ENCODE measurements at regions of chr1 and their contacts with region 1.

Region 1: DNA sequence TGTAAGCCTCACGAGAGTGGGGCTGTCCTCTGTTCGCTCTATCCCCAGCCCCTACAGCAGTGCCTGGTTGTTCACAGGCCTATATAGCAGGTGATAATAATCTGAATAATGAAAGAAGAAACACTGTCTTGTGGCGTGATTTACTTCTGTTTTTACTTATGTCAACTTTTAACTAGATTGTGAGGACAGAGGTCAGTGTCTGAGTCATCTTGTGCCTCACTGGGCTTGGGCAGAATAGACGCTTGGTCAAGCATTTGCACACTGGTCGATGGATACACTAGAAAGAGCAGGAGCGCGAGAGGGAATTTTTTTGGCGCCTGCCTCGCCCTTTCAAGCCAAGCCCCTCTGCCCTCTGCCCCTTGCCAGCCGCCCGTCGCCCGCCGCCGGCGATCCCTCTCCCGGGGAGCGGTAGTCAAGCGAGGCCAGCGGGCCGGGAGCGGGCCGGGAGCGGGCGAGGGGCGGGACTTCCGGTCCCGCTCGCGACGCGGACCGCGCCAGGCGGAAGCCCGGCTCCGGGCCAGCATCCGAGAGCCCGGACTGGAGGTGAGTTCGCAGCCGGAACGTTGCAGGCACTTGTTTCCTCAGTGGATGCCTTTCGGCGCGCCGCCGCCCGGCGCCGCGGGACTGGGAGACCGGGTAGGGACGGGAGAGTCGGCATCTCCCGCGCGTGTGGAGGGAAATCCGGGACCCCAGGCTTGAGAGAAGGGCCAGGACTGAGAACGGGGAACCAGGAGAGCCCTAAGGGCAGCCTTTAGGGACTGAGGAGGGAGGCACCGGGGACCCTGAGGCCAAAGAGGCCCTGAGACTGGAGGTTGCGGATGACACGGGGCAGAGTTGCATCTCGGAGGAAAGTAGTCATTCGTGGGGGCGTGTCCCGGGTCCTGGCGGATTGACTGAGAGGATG is at the start of gene DISP1:
- DNase-seq: peak; percentile 87
- H3K4me3 Mint-ChIP-seq: peak within 1 kb of the TSS; percentile 96
- H3K27ac Mint-ChIP-seq: peak within 1 kb of the TSS; percentile 96
- H3K4me1 Mint-ChIP-seq: peaks cover 28% of the 10 kb centered on the region
- H3K27me3 Mint-ChIP-seq: no peaks in the 10 kb centered on the region
- CTCF ChIP-seq: no peak
- total RNA-seq, gene DISP1: 6.7 and 7.6 TPM in 2 replicates

Region 2: GRCh38 chr1:222301652-222302051 is 513.1 kb before region 1 on chr1:
- CTCF ChIA-PET with region 1: no interaction called
- POLR2A ChIA-PET with region 1: no interaction called
- intact Hi-C with region 1: no loop called
- DNase-seq: no peak
- H3K4me3 Mint-ChIP-seq: no peak overlapping the region
- H3K27ac Mint-ChIP-seq: no peak overlapping the region
- H3K4me1 Mint-ChIP-seq: peaks cover 4% of the 10 kb centered on the region
- H3K27me3 Mint-ChIP-seq: no peaks in the 10 kb centered on the region
- CTCF ChIP-seq: no peak

Region 3: DNA sequence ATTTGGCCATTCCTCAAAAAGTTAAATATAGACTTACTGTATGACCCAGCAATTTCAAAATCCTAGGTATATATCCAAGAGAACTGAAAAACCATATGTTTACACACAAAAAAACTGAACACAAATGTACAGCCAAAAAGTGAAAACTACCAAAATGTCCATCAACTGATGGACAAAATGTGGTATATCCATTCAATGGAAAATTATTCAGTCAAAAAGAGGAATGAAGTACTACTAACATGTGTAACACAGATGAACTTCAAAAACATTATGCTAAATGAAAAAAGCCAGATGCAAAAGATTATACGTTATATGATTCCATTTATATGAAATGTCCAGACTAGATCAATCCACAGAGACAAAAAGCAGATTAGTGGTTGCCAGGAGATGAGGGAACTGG is 110.5 kb before region 1 on chr1:
- CTCF ChIA-PET with region 1: no interaction called
- POLR2A ChIA-PET with region 1: no interaction called
- intact Hi-C with region 1: no loop called
- DNase-seq: no peak
- H3K4me3 Mint-ChIP-seq: no peak overlapping the region
- H3K27ac Mint-ChIP-seq: no peak overlapping the region
- H3K4me1 Mint-ChIP-seq: peaks cover 7% of the 10 kb centered on the region
- H3K27me3 Mint-ChIP-seq: no peaks in the 10 kb centered on the region
- CTCF ChIP-seq: no peak

Region 4: DNA sequence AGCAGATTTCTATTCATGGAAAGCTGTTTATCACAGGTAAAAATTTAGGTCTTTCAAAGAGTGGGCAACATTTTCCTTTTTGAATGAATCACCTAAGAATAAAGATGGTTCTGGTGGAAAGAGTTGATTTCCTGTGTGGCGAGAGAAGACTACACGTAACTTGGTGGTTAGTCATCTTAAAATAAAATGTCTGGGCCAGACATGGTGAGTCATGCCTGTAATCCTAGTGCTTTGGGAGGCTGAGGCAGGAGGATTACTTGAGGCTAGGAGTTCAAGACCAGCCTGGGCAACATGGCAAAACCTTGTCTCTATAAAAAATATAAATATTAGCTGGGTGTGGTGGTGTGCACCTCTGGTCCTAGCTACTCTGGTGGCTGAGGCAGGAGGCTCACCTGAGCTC is 65.8 kb after region 1 on chr1:
- CTCF ChIA-PET with region 1: no interaction called
- POLR2A ChIA-PET with region 1: no interaction called
- intact Hi-C with region 1: no loop called
- DNase-seq: peak; percentile 71
- H3K4me3 Mint-ChIP-seq: no peak overlapping the region
- H3K27ac Mint-ChIP-seq: no peak overlapping the region
- H3K4me1 Mint-ChIP-seq: peaks cover 10% of the 10 kb centered on the region
- H3K27me3 Mint-ChIP-seq: no peaks in the 10 kb centered on the region
- CTCF ChIP-seq: no peak

Region 5: DNA sequence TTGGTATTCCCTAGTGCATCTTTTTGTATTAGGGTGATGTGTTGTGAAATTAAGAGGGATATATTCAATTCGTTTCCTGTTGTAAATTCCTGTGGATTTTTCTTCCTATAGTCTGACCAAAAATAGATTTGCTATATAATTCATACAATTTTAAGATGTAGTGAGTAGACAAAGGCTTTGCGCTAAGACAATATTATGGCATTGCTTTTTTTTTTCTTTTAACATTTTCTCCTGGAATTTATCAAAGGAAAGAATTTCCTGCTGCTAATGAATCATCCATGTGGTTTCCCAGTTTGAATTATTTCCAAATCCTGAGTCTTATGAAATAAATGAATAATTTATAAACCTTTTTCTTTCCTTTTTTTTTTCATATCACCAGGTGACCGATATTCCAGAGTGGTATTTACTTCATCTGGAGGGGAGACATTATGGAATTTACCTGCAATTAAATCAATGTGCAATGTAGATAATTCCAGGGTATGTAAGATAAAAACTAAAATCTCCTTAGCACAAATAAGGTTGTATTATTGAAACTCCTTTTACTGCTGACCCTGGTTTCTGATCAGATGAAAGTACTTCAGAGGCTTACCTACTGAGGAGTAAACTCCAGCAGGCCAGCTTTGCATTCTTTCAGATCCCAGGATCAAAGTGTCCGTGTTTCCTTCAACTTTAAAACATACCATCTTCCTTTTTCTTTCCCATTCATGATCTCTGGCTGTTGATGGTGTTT is 179.9 kb after region 1 on chr1:
- CTCF ChIA-PET with region 1: interaction called, 3 read pairs
- POLR2A ChIA-PET with region 1: no interaction called
- intact Hi-C with region 1: loop called (anchors 5 kb)
- DNase-seq: peak; percentile 88
- H3K4me3 Mint-ChIP-seq: peak overlapping the region; percentile 32
- H3K27ac Mint-ChIP-seq: peak overlapping the region; percentile 65
- H3K4me1 Mint-ChIP-seq: peaks cover 29% of the 10 kb centered on the region
- H3K27me3 Mint-ChIP-seq: peaks cover 17% of the 10 kb centered on the region
- CTCF ChIP-seq: no peak

Region 6: GRCh38 chr1:223258741-223259198 is 444.0 kb after region 1 on chr1:
- CTCF ChIA-PET with region 1: no interaction called
- POLR2A ChIA-PET with region 1: no interaction called
- intact Hi-C with region 1: loop called (anchors 10 kb)
- DNase-seq: peak; percentile 98
- H3K4me3 Mint-ChIP-seq: no peak overlapping the region
- H3K27ac Mint-ChIP-seq: no peak overlapping the region
- H3K4me1 Mint-ChIP-seq: peaks cover 32% of the 10 kb centered on the region
- H3K27me3 Mint-ChIP-seq: no peaks in the 10 kb centered on the region
- CTCF ChIP-seq: no peak